HEK293T (cell line): ENCODE measurements at regions of chr7 and their contacts with region 1.

Region 1: GRCh38 chr7:130050773-130051125 is 425 bp downstream of the ZC3HC1 start:
- DNase-seq: no peak

Region 2: DNA sequence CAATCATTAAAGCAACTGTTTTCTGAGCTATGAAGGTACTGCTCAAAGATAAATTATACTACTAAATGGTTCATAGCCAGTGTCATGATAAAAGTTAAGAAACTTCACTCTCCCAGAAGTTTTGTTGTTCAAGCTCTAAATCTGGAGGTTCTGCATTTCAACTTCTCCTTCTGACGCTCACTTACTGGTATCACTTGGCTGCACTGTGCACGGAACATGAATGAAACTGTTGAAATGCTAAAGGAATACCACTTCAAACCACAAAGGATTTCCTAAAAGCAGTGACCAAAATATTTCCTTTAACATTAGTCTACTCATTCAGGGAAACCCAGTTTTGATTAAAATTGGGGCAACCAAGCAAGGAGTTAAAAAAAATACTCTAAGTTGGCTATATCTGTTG is 191.6 kb before region 1 on chr7:
- CTCF ChIA-PET with region 1: no interaction called
- POLR2A ChIA-PET with region 1: no interaction called
- DNase-seq: no peak

Region 3: GRCh38 chr7:130024390-130024789 is 26.4 kb before region 1 on chr7:
- CTCF ChIA-PET with region 1: no interaction called
- POLR2A ChIA-PET with region 1: no interaction called
- DNase-seq: no peak

Region 4: DNA sequence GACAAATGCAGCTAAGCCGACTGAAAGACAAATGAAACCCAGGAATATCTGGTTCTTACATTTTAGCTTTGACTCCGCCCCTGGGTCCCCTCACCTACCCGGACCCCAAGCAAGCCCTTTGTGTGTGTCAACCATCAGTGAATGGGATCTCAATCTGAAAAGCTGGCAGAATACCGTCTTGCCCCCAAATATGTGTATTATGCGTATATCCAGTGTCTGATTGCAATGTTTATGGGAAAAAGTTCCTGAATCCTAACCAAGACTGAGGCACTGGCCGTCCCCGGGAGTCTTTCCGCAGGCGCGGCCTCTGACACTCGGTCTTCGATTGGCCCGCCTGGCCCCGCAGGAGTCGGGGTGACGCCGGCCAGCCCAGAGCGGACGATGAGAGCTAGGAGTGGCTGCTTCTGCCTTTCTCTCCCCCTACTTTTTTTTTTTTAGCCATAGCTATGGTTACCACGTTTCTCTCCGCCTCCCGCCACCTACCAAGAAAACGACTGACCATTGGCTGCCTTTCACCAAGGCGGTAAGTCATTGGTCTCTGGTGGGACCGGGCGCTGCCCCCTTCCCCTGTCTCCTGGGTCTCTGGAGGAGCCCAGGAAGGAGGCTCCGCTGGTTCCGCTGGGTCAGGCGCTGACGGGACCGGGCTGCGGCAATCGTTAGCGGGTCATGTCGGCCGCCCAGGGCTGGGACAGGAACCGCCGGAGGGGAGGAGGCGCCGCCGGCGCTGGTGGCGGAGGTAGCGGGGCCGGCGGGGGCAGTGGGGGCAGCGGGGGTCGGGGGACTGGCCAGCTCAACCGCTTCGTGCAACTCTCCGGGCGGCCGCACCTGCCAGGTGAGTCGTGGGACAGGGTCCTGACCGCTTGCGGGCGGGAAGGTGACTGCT is 19.5 kb after region 1 on chr7 and contains the start of gene KLHDC10:
- CTCF ChIA-PET with region 1: no interaction called
- POLR2A ChIA-PET with region 1: interaction called, 24 read pairs
- DNase-seq: peak; percentile 93